ENCODE measurements at regions of chr10 and their contacts with region 1.

Region 1: DNA sequence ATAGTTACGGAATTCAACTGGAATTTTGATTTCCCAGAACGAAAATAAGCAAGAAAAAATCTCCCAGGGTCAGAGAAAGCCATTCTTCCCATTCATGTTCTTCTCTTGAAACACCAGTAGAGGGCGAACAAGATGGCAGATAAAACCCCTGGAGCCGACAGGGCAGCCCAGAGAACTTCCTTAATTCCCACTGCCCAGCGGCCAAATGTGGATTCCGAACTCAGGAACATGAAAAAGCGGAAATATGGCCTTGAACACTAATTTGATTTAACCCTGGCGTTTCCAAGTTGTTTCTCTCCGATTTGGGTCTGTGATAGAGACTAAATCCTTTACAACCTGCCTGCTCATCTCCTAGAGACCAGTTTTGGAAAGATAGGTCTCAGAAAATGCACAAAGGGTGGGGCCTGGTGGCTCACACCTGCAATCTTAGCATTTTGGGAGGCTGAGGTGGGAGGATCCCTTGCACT is 100.7 kb upstream of the WAC start:
- DNase-seq: no peak
- ATAC-seq: peak; percentile 58
- H3K4me3 Mint-ChIP-seq: peak overlapping the region; percentile 66
- H3K27ac Mint-ChIP-seq: no peak overlapping the region
- H3K4me1 Mint-ChIP-seq: peaks cover 6% of the 10 kb centered on the region
- H3K27me3 Mint-ChIP-seq: no peaks in the 10 kb centered on the region
- CTCF ChIP-seq: peak; percentile 75

Region 2: GRCh38 chr10:28179006-28179742 is 253.1 kb before region 1 on chr10:
- CTCF ChIA-PET with region 1: no interaction called
- POLR2A ChIA-PET with region 1: no interaction called
- intact Hi-C with region 1: no loop called
- DNase-seq: no peak
- ATAC-seq: peak; percentile 64
- H3K4me3 Mint-ChIP-seq: no peak overlapping the region
- H3K27ac Mint-ChIP-seq: no peak overlapping the region
- H3K4me1 Mint-ChIP-seq: peaks cover 15% of the 10 kb centered on the region
- H3K27me3 Mint-ChIP-seq: no peaks in the 10 kb centered on the region
- CTCF ChIP-seq: peak; percentile 88

Region 3: GRCh38 chr10:28569506-28570159 is 137.4 kb after region 1 on chr10:
- CTCF ChIA-PET with region 1: no interaction called
- POLR2A ChIA-PET with region 1: no interaction called
- intact Hi-C with region 1: loop called (anchors 5 kb)
- DNase-seq: no peak
- ATAC-seq: no peak
- H3K4me3 Mint-ChIP-seq: no peak overlapping the region
- H3K27ac Mint-ChIP-seq: no peak overlapping the region
- H3K4me1 Mint-ChIP-seq: peaks cover 68% of the 10 kb centered on the region
- H3K27me3 Mint-ChIP-seq: no peaks in the 10 kb centered on the region
- CTCF ChIP-seq: no peak

Region 4: DNA sequence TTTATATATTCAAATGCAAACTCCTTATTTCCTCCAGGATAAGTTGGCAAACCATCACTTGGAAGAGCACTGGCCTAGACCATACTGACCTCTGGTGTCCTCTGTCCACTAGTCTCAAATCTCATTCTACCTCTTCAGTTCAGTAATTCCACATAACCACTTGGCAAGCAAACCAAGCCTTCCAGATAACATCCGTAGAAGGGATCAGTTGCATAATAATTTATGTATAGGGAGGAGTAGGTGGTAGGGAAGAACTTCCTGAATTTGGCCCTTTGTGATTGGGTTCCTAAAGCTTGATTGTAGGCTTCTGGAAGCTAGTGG is 155.7 kb after region 1 on chr10:
- CTCF ChIA-PET with region 1: no interaction called
- POLR2A ChIA-PET with region 1: no interaction called
- intact Hi-C with region 1: loop called (anchors 5 kb)
- DNase-seq: no peak
- ATAC-seq: no peak
- H3K4me3 Mint-ChIP-seq: no peak overlapping the region
- H3K27ac Mint-ChIP-seq: no peak overlapping the region
- H3K4me1 Mint-ChIP-seq: peaks cover 9% of the 10 kb centered on the region
- H3K27me3 Mint-ChIP-seq: no peaks in the 10 kb centered on the region
- CTCF ChIP-seq: no peak

Region 5: DNA sequence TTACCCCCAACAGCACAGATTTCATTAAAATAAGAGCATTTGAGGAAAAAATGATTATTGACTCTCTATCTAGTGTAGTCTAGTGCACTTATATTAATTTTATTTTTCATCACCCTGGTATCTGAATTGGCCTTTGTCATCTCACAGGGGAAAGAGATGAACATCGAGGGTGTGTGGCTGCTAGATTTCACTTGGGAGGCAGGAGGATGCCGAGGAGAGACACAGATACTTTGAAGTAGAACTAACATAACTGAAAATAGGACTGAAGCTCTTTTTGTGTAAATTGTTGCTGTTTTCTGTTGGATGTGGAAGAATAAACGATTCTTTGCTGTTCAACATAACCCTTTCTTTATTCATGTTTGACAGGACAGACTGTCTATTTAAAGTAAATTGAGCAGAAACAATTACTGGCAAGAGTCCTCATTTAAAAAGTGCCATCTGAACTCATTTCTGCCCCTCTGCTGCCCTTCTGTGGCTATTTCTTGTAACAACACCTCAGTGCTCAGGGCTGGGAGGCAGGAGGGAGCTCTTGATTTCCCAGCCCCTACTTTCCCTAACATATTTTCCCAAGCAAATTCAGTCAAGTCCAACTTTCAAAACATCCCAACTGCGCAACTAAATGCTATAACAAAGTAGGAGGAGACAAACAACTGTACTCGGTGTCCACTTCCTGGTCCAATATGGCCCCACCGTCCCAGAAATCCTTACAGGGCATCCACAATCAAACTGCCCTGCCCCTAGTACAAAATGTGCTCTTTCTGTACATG is 872.2 kb after region 1 on chr10:
- CTCF ChIA-PET with region 1: no interaction called
- POLR2A ChIA-PET with region 1: no interaction called
- intact Hi-C with region 1: loop called (anchors 10 kb)
- DNase-seq: no peak
- ATAC-seq: no peak
- H3K4me3 Mint-ChIP-seq: no peak overlapping the region
- H3K27ac Mint-ChIP-seq: no peak overlapping the region
- H3K4me1 Mint-ChIP-seq: no peaks in the 10 kb centered on the region
- H3K27me3 Mint-ChIP-seq: peaks cover 11% of the 10 kb centered on the region
- CTCF ChIP-seq: no peak

Measured in activated B cell treated with CpG ODN at 0.5 μM for 24 hours (primary cell).